Activated T-helper 1 cell treated with anti-CD3 and anti-CD28 coated beads, Interleukin-12 subunit alpha, Interleukin-12 subunit beta, Interleukin-2, Interleukin-4 antibody, amounts not matched to agents 30 ng/mL and 10 ng/mL and 1 ng/mL, durations not matched to agents 14 hours and 24 hours and 36 hours (primary cell): ENCODE measurements at regions of chr2 and their contacts with region 1.

Region 1: DNA sequence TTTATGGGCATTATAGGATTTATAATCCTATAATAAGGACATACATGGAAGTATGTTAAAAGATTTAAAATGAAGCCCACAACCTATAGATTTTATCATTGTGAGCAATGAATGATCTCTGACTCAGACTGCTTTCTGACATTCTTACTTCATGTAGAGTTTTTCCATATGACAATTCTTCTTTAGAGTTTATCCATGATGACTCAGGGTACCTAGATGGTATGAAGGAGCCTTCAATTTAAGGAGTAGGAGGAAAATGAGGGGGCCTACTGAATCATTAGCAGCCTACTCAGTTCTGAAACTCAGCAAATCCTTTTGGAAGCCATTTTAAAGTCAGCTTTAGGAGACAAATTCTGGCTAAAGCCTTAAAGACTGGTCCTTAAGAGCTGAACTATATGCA is 10.4 kb downstream of the PELI1 start:
- DNase-seq: no peak
- H3K4me3 Mint-ChIP-seq: peak overlapping the region; percentile 39
- H3K27ac Mint-ChIP-seq: peak overlapping the region; percentile 88
- H3K4me1 Mint-ChIP-seq: peaks cover 90% of the 10 kb centered on the region
- H3K27me3 Mint-ChIP-seq: no peaks in the 10 kb centered on the region

Region 2: DNA sequence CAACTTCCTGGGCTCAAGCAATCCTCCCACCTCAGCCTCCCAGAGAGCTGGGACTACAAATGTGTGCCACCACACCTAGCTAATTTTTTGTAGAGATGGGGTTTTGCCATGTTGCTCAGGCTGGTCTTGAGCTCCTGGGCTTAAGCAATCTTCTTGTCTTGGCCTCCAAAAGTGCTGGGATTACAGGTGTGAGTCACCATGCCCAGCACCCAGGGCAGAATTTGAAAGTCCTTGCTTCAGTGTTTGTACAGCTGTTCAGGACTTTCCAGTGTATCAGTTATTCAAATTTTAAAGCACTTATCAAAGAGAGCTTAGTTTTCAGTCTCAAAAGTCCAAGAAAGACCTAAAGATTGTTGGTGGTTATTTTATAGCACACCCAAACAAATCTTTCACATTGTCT is 71.0 kb before region 1 on chr2:
- intact Hi-C with region 1: loop called (anchors 2 kb)
- DNase-seq: no peak
- H3K4me3 Mint-ChIP-seq: no peak overlapping the region
- H3K27ac Mint-ChIP-seq: peak overlapping the region; percentile 18
- H3K4me1 Mint-ChIP-seq: peaks cover 34% of the 10 kb centered on the region
- H3K27me3 Mint-ChIP-seq: no peaks in the 10 kb centered on the region

Region 3: GRCh38 chr2:64092502-64092901 is 41.3 kb before region 1 on chr2:
- intact Hi-C with region 1: no loop called
- DNase-seq: no peak
- H3K4me3 Mint-ChIP-seq: no peak overlapping the region
- H3K27ac Mint-ChIP-seq: no peak overlapping the region
- H3K4me1 Mint-ChIP-seq: peaks cover 26% of the 10 kb centered on the region
- H3K27me3 Mint-ChIP-seq: no peaks in the 10 kb centered on the region

Region 4: GRCh38 chr2:64114063-64114911 is 19.5 kb before region 1 on chr2:
- intact Hi-C with region 1: loop called (anchors 1 kb)
- DNase-seq: no peak
- H3K4me3 Mint-ChIP-seq: peak overlapping the region; percentile 17
- H3K27ac Mint-ChIP-seq: peak overlapping the region; percentile 59
- H3K4me1 Mint-ChIP-seq: peaks cover 73% of the 10 kb centered on the region
- H3K27me3 Mint-ChIP-seq: no peaks in the 10 kb centered on the region

Region 5: DNA sequence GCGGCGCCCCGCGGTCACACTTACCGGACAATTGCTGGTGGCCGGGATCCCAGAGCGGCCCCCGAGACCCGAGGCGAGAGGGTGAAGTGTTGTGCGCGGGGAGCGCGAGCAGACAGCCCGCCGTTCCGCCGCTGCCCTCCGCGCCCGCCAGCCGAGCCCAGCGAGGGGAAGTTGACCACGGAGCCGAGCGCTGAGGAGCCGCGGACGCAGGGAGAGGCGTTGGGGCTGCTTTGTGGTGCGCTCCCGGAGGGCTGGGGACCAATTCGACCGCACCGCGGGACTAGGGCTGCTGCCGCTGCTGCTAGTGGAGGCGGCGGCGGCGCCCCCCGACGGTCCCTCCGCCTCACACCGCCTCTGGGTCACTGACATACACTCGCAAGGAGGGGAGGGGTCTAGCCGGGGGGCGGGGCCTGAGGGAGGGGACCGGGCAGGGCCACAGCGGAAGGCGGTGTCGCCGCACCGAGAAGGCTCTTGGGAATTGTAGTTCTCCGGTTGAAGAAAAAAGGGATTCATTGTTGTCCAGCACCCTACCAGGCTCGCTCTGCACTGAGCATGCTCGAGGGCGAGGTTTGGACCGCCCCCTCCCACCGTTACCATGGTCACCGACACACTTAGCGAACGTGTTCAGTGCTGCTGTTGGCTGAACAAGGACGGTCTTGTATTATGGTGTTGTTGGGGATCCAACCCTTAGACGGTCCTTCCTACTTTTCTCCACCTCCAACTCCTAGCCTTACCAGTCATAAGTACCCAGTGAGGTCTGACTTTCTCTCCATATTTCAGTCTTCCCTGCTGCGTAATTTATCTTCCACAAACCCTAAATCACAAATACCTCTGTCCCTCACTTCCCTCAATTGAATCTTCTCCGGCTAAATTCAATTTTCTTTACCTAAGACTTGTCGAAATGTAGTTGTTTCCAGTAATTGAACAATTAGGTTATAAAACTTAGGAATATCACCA is 10.5 kb after region 1 on chr2 and contains the start of gene PELI1:
- intact Hi-C with region 1: loop called (anchors 1 kb)
- DNase-seq: peak; percentile 90
- H3K4me3 Mint-ChIP-seq: peak within 1 kb of the TSS; percentile 98
- H3K27ac Mint-ChIP-seq: peak within 1 kb of the TSS; percentile 97
- H3K4me1 Mint-ChIP-seq: peaks cover 28% of the 10 kb centered on the region
- H3K27me3 Mint-ChIP-seq: peaks cover 3% of the 10 kb centered on the region
- total RNA-seq, gene PELI1: 47.1 and 50.4 TPM in 2 replicates

Region 6: DNA sequence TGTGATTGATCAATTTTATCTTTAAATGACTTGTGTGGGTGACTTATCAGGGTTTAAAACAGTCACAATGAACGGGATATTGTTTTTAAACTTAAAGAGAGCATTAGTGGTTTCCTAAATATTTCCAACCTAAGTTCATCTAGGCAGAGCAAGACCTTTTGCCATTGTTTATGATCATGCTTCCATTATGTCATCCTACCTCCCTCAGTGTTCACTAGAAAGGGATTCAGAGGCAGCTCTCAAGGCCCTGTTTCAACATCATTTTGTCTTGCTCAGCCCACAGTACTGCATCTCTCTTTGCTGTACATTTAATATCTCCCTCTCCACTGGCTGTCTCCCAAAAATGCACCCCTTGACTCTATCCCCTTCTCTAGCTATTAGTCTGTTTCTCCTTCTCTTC is 31.9 kb after region 1 on chr2:
- intact Hi-C with region 1: loop called (anchors 1 kb)
- DNase-seq: no peak
- H3K4me3 Mint-ChIP-seq: no peak overlapping the region
- H3K27ac Mint-ChIP-seq: no peak overlapping the region
- H3K4me1 Mint-ChIP-seq: no peaks in the 10 kb centered on the region
- H3K27me3 Mint-ChIP-seq: no peaks in the 10 kb centered on the region

Region 7: GRCh38 chr2:64260817-64261216 is 127.0 kb after region 1 on chr2:
- intact Hi-C with region 1: no loop called
- DNase-seq: peak; percentile 29
- H3K4me3 Mint-ChIP-seq: peak overlapping the region; percentile 68
- H3K27ac Mint-ChIP-seq: peak overlapping the region; percentile 87
- H3K4me1 Mint-ChIP-seq: peaks cover 10% of the 10 kb centered on the region
- H3K27me3 Mint-ChIP-seq: peaks cover 2% of the 10 kb centered on the region